Activated naive CD4-positive, alpha-beta T cell treated with anti-CD3 and anti-CD28 coated beads for 36 hours (primary cell): ENCODE measurements at regions of chr7 and their contacts with region 1.

Region 1: DNA sequence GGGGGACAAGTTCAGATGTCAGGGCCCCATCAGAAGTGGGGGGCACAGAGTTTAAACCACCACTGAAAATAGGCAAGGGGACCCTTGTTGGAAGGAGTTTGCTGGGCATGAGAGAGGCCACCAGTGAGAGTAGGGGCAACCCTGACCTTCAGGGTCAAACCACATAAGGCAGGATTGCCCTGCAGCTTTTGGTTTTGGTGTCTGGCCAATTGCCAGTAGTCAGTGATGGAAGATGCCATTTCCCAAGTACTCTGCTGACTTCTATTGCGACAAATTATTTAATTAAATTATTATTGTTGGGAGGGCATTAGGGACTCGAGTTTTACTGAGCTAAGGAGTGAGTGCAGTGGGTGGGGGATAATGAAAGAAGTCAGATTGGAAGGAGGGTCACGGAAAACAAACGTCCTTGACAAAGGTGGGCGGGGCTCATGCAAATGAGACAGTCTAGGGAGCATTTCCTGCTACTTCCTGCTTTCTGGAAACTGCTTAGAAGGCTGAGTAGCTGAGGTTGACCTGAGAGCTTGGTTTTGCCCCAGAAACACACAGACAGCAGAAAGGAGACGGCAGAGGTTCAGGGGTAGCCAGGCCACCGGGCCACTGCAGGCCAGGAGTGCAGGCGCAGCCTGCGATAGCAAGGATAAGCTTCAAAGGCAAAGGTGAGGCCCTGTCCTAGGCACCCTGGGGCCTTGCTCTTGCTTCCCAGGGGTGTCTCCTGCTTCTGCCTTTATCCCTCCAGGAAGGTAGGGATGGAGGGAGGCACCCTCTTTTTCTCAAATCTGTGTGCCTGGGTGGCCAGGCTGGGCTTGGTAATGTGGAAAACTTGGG is 74.1 kb upstream of the ANLN start:
- DNase-seq: no peak
- H3K4me3 Mint-ChIP-seq: no peak overlapping the region
- H3K27ac Mint-ChIP-seq: no peak overlapping the region
- H3K4me1 Mint-ChIP-seq: no peaks in the 10 kb centered on the region
- H3K27me3 Mint-ChIP-seq: no peaks in the 10 kb centered on the region

Region 2: GRCh38 chr7:35430547-35431153 is 884.9 kb before region 1 on chr7:
- CTCF ChIA-PET with region 1: no interaction called
- intact Hi-C with region 1: no loop called
- DNase-seq: peak; percentile 27
- H3K4me3 Mint-ChIP-seq: no peak overlapping the region
- H3K27ac Mint-ChIP-seq: no peak overlapping the region
- H3K4me1 Mint-ChIP-seq: no peaks in the 10 kb centered on the region
- H3K27me3 Mint-ChIP-seq: peaks cover 9% of the 10 kb centered on the region

Region 3: GRCh38 chr7:35985126-35985754 is 330.3 kb before region 1 on chr7:
- CTCF ChIA-PET with region 1: interaction called, 31 read pairs
- intact Hi-C with region 1: loop called (anchors 1 kb)
- DNase-seq: peak; percentile 85
- H3K4me3 Mint-ChIP-seq: no peak overlapping the region
- H3K27ac Mint-ChIP-seq: no peak overlapping the region
- H3K4me1 Mint-ChIP-seq: no peaks in the 10 kb centered on the region
- H3K27me3 Mint-ChIP-seq: no peaks in the 10 kb centered on the region

Region 4: GRCh38 chr7:36305226-36305625 is 10.3 kb before region 1 on chr7:
- CTCF ChIA-PET with region 1: interaction called, 10 read pairs
- intact Hi-C with region 1: no loop called
- DNase-seq: no peak
- H3K4me3 Mint-ChIP-seq: no peak overlapping the region
- H3K27ac Mint-ChIP-seq: no peak overlapping the region
- H3K4me1 Mint-ChIP-seq: no peaks in the 10 kb centered on the region
- H3K27me3 Mint-ChIP-seq: no peaks in the 10 kb centered on the region

Region 5: GRCh38 chr7:36475381-36475780 is 159.9 kb after region 1 on chr7:
- CTCF ChIA-PET with region 1: no interaction called
- intact Hi-C with region 1: no loop called
- DNase-seq: peak; percentile 10
- H3K4me3 Mint-ChIP-seq: no peak overlapping the region
- H3K27ac Mint-ChIP-seq: no peak overlapping the region
- H3K4me1 Mint-ChIP-seq: peaks cover 16% of the 10 kb centered on the region
- H3K27me3 Mint-ChIP-seq: no peaks in the 10 kb centered on the region